ENCODE measurements at regions of chr10 and their contacts with region 1.

Region 1: GRCh38 chr10:110067960-110068770 is 60.4 kb downstream of the ADD3 start:
- DNase-seq: peak; percentile 65
- ATAC-seq: peak; percentile 81

Region 2: GRCh38 chr10:110016039-110016438 is 52.1 kb before region 1 on chr10:
- intact Hi-C with region 1: loop called (anchors 10 kb)
- DNase-seq: no peak
- ATAC-seq: peak; percentile 56